Mammary epithelial cell (primary cell): ENCODE measurements at regions of chr13 and their contacts with region 1.

Region 1: GRCh38 chr13:76980075-76980718 is 11.7 kb upstream of the CLN5 start:
- DNase-seq: peak; percentile 40
- H3K4me3 ChIP-seq: peak overlapping the region; percentile 24 to 32 (median 26)
- H3K27ac ChIP-seq: no peak overlapping the region
- H3K4me1 ChIP-seq: peaks cover 23% of the 10 kb centered on the region
- H3K27me3 ChIP-seq: no peaks in the 10 kb centered on the region
- CTCF ChIP-seq: peak; percentile 92 to 99

Region 2: DNA sequence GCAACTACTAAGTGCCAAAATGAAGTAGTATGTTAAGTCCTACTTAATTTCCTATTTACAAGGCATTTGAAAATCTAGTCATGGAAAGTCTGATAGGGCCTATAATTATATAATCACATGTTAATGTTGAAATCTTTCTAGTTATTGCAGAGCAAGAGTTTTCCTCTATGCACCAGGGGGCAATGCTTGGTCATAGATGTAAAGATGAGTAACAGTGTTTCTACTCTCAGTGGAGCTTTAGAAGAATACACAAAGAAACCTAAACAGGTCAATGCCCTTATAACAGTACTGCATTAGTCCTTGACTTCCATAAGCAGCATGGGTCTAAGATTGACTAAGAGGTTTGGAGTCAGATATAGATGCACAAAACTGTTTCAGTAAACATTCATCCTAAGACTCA is 312.6 kb before region 1 on chr13:
- CTCF ChIA-PET with region 1: no interaction called
- dilution Hi-C with region 1: no loop called
- in situ Hi-C with region 1: no loop called
- intact Hi-C with region 1: loop called (anchors 5 kb)
- DNase-seq: peak; percentile 16
- H3K4me3 ChIP-seq: no peak overlapping the region
- H3K27ac ChIP-seq: no peak overlapping the region
- H3K4me1 ChIP-seq: no peaks in the 10 kb centered on the region
- H3K27me3 ChIP-seq: peaks cover 4% of the 10 kb centered on the region
- CTCF ChIP-seq: peak; percentile 18 to 37

Region 3: DNA sequence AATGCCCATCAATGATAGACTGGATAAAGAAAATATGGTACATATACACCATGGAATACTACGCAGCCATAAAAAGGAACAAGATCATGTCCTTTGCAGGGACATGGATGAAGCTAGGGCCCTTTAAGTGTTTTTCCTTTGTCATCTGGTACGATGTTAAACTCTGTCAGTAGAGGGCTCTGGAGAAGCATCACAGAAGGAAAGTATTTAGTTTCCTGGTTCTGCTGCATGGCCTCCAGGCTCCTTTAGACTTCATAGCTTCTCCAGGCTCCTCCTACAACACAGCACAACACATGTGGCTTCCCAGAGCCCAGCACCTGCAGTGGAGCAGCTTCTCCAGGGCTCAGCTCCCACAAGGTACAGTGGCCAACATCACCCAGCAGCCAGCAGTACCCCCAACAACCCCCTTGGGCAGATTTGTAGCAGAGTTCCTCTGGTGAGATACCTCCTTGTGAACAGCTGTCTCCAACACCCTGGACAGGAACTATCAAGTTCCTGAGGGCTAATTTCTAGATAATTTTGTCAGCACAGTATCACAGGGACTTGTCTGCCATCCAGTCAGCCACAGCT is 157.4 kb before region 1 on chr13:
- CTCF ChIA-PET with region 1: no interaction called
- dilution Hi-C with region 1: no loop called
- in situ Hi-C with region 1: no loop called
- intact Hi-C with region 1: loop called (anchors 2 kb)
- DNase-seq: peak; percentile 46
- H3K4me3 ChIP-seq: no peak overlapping the region
- H3K27ac ChIP-seq: no peak overlapping the region
- H3K4me1 ChIP-seq: no peaks in the 10 kb centered on the region
- H3K27me3 ChIP-seq: peaks cover under 1% of the 10 kb centered on the region
- CTCF ChIP-seq: peak; percentile 27 to 63

Region 4: GRCh38 chr13:76848596-76848995 is 131.6 kb before region 1 on chr13:
- CTCF ChIA-PET with region 1: no interaction called
- dilution Hi-C with region 1: no loop called
- in situ Hi-C with region 1: no loop called
- intact Hi-C with region 1: no loop called
- DNase-seq: no peak
- H3K4me3 ChIP-seq: no peak overlapping the region
- H3K27ac ChIP-seq: no peak overlapping the region
- H3K4me1 ChIP-seq: peaks cover 17% of the 10 kb centered on the region
- H3K27me3 ChIP-seq: no peaks in the 10 kb centered on the region
- CTCF ChIP-seq: no peak